ENCODE measurements at regions of chrX and their contacts with region 1.

Region 1: DNA sequence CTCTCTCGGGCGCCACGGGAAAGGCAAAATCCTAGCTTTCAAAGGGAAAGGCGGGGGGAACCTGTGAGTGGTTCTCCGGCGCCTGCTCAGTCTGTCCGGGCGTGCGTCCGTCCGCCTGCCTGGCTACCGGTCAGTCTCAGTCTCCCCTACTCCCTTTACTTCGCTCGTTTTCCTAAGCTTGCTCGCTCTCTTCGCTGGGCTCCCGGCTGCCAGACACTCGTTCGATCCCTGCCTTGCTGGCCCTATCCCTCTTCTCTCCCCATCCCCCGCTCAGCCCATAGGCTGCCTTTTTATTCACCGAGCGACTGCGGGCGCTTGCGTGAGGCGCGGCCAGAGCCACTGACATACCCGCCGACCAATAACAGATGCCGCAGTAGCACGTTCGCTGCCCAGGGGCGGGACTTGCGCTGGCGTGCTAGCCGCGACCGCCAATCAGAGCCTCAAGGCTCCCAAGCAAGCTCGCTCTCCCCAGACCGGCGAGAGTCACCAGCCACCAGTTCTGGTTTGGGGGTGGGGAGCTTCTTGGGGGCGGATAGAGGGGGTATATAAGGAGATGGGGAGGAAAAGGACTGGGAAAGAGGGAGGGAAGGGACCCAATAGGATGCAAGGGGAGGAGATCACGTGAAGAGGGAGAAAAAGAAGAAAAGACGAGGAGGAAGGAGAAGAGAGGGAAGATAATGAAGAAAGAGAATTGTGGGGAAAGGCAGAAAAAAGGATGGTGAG is 30.0 kb downstream of the ARHGEF9 start:
- DNase-seq: peak; percentile 81
- H3K4me3 Mint-ChIP-seq: peak overlapping the region; percentile 97
- H3K27ac Mint-ChIP-seq: peak overlapping the region; percentile 94
- H3K4me1 Mint-ChIP-seq: peaks cover 56% of the 10 kb centered on the region
- H3K27me3 Mint-ChIP-seq: peaks cover 2% of the 10 kb centered on the region

Region 2: DNA sequence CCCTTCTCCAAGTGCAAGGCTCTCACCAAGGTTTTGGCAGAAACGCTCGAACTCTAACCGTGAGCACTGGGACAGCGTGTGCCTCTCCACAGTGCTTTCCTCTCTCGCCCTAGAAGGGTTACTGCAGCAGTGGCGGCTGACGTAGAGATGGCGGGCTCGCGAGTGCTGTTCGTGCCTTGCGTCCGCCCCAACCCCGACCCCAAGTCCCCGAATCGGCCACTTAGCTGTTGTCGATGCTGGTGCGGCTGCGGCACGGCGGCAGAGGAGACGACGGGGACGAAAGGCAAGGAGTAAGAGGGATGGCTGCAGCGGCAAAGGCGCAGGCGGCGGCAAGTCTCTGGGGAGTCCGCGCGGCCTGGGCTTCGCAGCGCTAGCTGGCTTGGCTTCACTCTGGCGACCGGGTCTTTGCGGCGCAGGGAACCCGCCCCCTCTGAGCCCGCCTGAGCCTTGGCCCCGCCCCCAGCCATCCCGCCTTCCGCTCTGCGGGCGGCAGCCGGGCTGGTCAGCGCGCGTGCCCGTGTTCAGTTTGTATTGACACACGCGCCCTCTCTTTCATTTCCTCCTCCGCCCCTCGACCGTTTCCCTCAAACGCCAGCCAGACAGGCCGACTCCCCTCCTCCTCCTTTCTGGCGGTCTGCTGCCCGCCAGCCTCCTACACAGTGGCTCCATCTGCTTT is 403.9 kb before region 1 on chrX and contains the start of gene SPIN4:
- intact Hi-C with region 1: loop called (anchors 1 kb)
- DNase-seq: peak; percentile 54
- H3K4me3 Mint-ChIP-seq: peak within 1 kb of the TSS; percentile 93
- H3K27ac Mint-ChIP-seq: peak within 1 kb of the TSS; percentile 81
- H3K4me1 Mint-ChIP-seq: peaks cover 27% of the 10 kb centered on the region
- H3K27me3 Mint-ChIP-seq: peaks cover 2% of the 10 kb centered on the region
- total RNA-seq, gene SPIN4: 4.4 and 4.5 TPM in 2 replicates

Region 3: GRCh38 chrX:63560601-63561218 is 194.3 kb before region 1 on chrX:
- intact Hi-C with region 1: loop called (anchors 2 kb)
- DNase-seq: peak; percentile 31
- H3K4me3 Mint-ChIP-seq: peak overlapping the region; percentile 97
- H3K27ac Mint-ChIP-seq: peak overlapping the region; percentile 73
- H3K4me1 Mint-ChIP-seq: peaks cover 9% of the 10 kb centered on the region
- H3K27me3 Mint-ChIP-seq: no peaks in the 10 kb centered on the region

Region 4: GRCh38 chrX:63581398-63581797 is 173.6 kb before region 1 on chrX:
- intact Hi-C with region 1: no loop called
- DNase-seq: no peak
- H3K4me3 Mint-ChIP-seq: no peak overlapping the region
- H3K27ac Mint-ChIP-seq: no peak overlapping the region
- H3K4me1 Mint-ChIP-seq: no peaks in the 10 kb centered on the region
- H3K27me3 Mint-ChIP-seq: no peaks in the 10 kb centered on the region

Region 5: DNA sequence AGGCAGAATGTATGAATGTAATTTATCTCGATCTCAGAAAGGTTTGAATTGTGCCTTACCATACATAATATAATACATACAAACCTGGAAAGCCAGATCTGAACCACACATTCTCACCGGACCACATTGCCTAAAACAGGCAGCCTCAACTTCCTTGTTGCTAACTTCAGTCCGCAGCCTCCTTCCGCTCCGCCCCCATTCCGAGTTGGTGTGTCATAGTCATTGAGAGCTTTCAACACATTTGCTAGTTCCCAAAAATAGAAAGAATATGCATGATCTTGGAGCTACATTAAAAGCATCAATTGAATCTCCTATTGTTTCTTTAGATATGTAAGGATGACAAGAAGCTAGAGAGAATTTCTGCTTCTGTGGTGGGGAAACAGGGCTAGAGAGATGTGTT is 97.2 kb before region 1 on chrX:
- intact Hi-C with region 1: no loop called
- DNase-seq: no peak
- H3K4me3 Mint-ChIP-seq: no peak overlapping the region
- H3K27ac Mint-ChIP-seq: no peak overlapping the region
- H3K4me1 Mint-ChIP-seq: no peaks in the 10 kb centered on the region
- H3K27me3 Mint-ChIP-seq: no peaks in the 10 kb centered on the region

Region 6: DNA sequence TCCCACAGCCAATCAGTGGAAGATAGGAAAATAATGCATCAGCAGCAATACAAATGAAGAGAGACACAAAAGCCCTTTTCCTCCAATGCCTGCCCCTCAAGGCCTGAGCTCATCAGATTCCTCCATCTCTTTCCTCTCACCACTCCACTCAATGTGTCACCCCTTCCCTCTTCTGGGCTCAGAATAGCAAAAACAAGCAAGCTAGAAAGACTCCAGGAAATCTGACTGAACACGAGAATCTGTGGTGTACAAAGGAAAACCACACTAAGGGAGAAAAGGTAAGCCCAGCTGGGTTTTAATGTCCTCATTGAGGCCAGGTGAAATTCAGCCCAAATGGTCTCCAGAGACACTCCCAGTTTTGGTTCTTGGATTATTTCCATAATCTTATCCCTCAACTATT is 16.3 kb before region 1 on chrX:
- intact Hi-C with region 1: loop called (anchors 2 kb)
- DNase-seq: no peak
- H3K4me3 Mint-ChIP-seq: peak overlapping the region; percentile 34
- H3K27ac Mint-ChIP-seq: no peak overlapping the region
- H3K4me1 Mint-ChIP-seq: peaks cover 48% of the 10 kb centered on the region
- H3K27me3 Mint-ChIP-seq: no peaks in the 10 kb centered on the region

Region 7: GRCh38 chrX:64394874-64395567 is 640.0 kb after region 1 on chrX and contains the start of gene MTMR8:
- intact Hi-C with region 1: loop called (anchors 10 kb)
- DNase-seq: peak; percentile 65
- H3K4me3 Mint-ChIP-seq: peak within 1 kb of the TSS; percentile 87
- H3K27ac Mint-ChIP-seq: peak within 1 kb of the TSS; percentile 54
- H3K4me1 Mint-ChIP-seq: peaks cover 17% of the 10 kb centered on the region
- H3K27me3 Mint-ChIP-seq: no peaks in the 10 kb centered on the region
- total RNA-seq, gene MTMR8: 4.1 and 7.1 TPM in 2 replicates

Region 8: GRCh38 chrX:65034668-65035445 is 1279.8 kb after region 1 on chrX:
- intact Hi-C with region 1: loop called (anchors 2 kb)
- DNase-seq: peak; percentile 76
- H3K4me3 Mint-ChIP-seq: peak within 1 kb of the TSS; percentile 91
- H3K27ac Mint-ChIP-seq: peak within 1 kb of the TSS; percentile 92
- H3K4me1 Mint-ChIP-seq: peaks cover 20% of the 10 kb centered on the region
- H3K27me3 Mint-ChIP-seq: no peaks in the 10 kb centered on the region

Measured in activated T-helper 1 cell treated with anti-CD3 and anti-CD28 coated beads, Interleukin-12 subunit alpha, Interleukin-12 subunit beta, Interleukin-2, Interleukin-4 antibody, amounts not matched to agents 30 ng/mL and 10 ng/mL and 1 ng/mL, durations not matched to agents 14 hours and 24 hours and 36 hours (primary cell).